Breast epithelium (tissue), 4 donors: ENCODE measurements at regions of chrX and their contacts with region 1.

Region 1: GRCh38 chrX:1330605-1331004 is 6.0 kb upstream of the IL3RA start:
- DNase-seq: no peak
- H3K4me3 ChIP-seq: no peak overlapping the region
- H3K27ac ChIP-seq: no peak overlapping the region
- H3K4me1 ChIP-seq: no peaks in the 10 kb centered on the region
- H3K27me3 ChIP-seq: peaks cover 0 to 26% of the 10 kb centered on the region in 2 donors
- CTCF ChIP-seq: no peak
- POLR2A ChIP-seq: no peak

Region 2: GRCh38 chrX:1281521-1281920 is 49.1 kb before region 1 on chrX:
- intact Hi-C with region 1: no loop called
- DNase-seq: no peak
- H3K4me3 ChIP-seq: no peak overlapping the region
- H3K27ac ChIP-seq: no peak overlapping the region
- H3K4me1 ChIP-seq: no peaks in the 10 kb centered on the region
- H3K27me3 ChIP-seq: no peaks in the 10 kb centered on the region
- CTCF ChIP-seq: no peak
- POLR2A ChIP-seq: no peak

Region 3: GRCh38 chrX:1358793-1359476 is 28.3 kb after region 1 on chrX:
- intact Hi-C with region 1: loop called (anchors 1 kb)
- DNase-seq: no peak
- H3K4me3 ChIP-seq: no peak overlapping the region
- H3K27ac ChIP-seq: no peak overlapping the region
- H3K4me1 ChIP-seq: no peaks in the 10 kb centered on the region
- H3K27me3 ChIP-seq: no peaks in the 10 kb centered on the region
- CTCF ChIP-seq: no peak
- POLR2A ChIP-seq: no peak